Aorta (tissue), 5 donors: ENCODE measurements at regions of chr1 and their contacts with region 1.

Region 1: DNA sequence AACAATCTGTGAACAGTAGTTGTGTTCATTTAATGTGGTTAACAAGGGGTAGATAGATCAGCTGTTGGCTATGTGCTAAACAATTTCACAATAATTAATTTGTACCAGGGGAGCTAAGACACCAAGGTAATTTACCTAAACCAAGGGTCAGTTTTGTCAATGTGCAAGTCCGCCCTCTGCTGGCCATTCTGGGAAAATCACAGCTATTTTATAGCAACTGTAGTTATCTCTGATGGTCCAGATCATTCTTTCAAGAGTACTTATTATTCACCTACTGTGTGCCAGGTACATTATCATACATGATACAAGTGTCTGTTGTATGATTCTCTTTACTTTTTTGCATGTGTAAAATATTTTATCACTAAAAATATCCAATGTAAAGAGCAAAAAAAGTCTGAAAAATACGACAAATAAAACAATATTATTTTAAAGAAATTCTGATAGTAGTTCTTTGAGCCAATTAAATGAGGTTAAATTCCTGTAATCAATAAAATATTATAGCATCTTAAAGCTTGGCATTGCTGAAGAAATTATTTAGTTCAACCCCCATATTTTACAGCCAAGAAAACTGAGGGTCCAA is 312.3 kb upstream of the FAM78B start:
- DNase-seq: no peak
- ATAC-seq: no peak
- H3K4me3 ChIP-seq: no peak overlapping the region
- H3K27ac ChIP-seq: no peak overlapping the region
- H3K4me1 ChIP-seq: no peaks in the 10 kb centered on the region
- H3K27me3 ChIP-seq: no peaks in the 10 kb centered on the region

Region 2: GRCh38 chr1:165928075-165928731 is 550.9 kb before region 1 on chr1:
- intact Hi-C with region 1: loop called (anchors 2 to 5 kb)
- DNase-seq: no peak
- ATAC-seq: no peak
- H3K4me3 ChIP-seq: no peak overlapping the region
- H3K27ac ChIP-seq: no peak overlapping the region
- H3K4me1 ChIP-seq: no peaks in the 10 kb centered on the region
- H3K27me3 ChIP-seq: peaks cover 0 to 3% of the 10 kb centered on the region in 2 donors